Mammary epithelial cell (primary cell): ENCODE measurements at regions of chr6 and their contacts with region 1.

Region 1: DNA sequence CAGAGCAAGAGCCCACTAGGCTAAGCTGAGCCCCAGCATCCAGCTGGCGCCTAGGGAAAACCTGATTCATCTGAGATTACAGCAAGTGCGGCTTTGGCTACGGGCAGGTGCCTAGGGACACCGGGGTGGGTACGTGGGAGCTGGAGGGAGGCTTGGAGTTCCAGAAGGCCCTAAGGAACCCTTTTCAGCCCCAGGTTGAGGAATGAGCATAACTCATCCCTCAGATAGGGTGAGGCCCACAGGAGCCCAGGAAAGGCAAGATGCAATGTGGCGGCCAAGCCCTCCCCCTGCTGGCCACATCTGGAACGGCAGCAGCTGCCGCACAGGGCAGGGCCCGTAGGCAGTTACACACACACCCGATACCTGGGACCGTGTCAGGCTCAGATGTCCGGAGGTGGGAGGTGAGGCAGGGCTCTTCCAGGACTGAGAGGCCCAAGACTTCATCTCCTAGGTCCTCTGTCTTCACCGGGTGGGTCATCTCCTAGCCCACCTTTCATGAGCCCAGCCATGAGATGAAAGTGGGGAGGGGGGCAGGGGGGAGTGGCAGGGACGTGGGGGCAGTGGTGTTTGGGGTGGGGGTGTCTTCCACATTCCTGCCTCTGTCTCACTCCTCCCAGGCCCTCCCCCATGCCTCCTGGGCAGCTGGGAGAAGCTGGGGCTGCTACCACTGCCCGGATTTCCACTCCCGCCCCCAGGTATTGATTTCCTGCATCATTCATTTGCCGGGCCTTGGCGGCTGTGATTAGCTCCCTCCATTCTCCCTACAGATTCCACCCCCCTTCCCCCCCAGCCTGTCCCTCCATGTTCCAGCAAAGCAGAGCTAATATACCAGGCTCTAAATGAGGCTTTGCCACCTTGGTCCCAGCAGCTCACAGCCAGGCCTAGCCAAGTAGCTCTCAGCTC is 5.5 kb downstream of the MDGA1 start:
- DNase-seq: peak; percentile 70
- H3K4me3 ChIP-seq: no peak overlapping the region
- H3K27ac ChIP-seq: no peak overlapping the region
- H3K4me1 ChIP-seq: peaks cover 25% of the 10 kb centered on the region
- H3K27me3 ChIP-seq: no peaks in the 10 kb centered on the region
- CTCF ChIP-seq: peak; percentile 97 to 98

Region 2: GRCh38 chr6:37298958-37299357 is 393.2 kb before region 1 on chr6:
- CTCF ChIA-PET with region 1: no interaction called
- dilution Hi-C with region 1: no loop called
- in situ Hi-C with region 1: no loop called
- intact Hi-C with region 1: no loop called
- DNase-seq: no peak
- H3K4me3 ChIP-seq: no peak overlapping the region
- H3K27ac ChIP-seq: no peak overlapping the region
- H3K4me1 ChIP-seq: no peaks in the 10 kb centered on the region
- H3K27me3 ChIP-seq: no peaks in the 10 kb centered on the region
- CTCF ChIP-seq: no peak

Region 3: GRCh38 chr6:37324131-37325033 is 367.8 kb before region 1 on chr6:
- CTCF ChIA-PET with region 1: no interaction called
- dilution Hi-C with region 1: no loop called
- in situ Hi-C with region 1: no loop called
- intact Hi-C with region 1: loop called (anchors 1 kb)
- DNase-seq: peak; percentile 78
- H3K4me3 ChIP-seq: no peak overlapping the region
- H3K27ac ChIP-seq: no peak overlapping the region
- H3K4me1 ChIP-seq: peaks cover 15% of the 10 kb centered on the region
- H3K27me3 ChIP-seq: no peaks in the 10 kb centered on the region
- CTCF ChIP-seq: no peak

Region 4: DNA sequence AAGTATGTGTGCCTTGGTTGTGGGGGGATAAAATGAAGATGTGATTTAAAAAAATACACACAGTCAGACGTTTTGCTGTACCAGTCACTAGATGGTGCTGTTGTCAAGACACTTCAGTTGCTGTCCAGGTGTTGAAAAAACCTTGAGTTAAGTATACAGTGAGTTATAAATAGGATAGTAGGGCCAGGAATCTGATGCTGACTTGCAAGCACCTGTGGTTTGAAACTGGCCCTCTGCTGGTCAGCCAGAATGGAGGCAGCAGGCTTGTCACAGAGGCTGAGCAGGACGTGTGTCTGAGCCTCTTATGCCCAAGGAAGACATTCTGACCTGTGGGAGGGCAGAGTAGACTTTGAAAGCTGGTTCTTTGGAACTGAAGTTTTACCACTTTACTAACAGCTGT is 310.6 kb before region 1 on chr6:
- CTCF ChIA-PET with region 1: no interaction called
- dilution Hi-C with region 1: no loop called
- in situ Hi-C with region 1: no loop called
- intact Hi-C with region 1: loop called (anchors 1 kb)
- DNase-seq: peak; percentile 68
- H3K4me3 ChIP-seq: no peak overlapping the region
- H3K27ac ChIP-seq: no peak overlapping the region
- H3K4me1 ChIP-seq: peaks cover 6% of the 10 kb centered on the region
- H3K27me3 ChIP-seq: no peaks in the 10 kb centered on the region
- CTCF ChIP-seq: peak; percentile 84 to 87

Region 5: DNA sequence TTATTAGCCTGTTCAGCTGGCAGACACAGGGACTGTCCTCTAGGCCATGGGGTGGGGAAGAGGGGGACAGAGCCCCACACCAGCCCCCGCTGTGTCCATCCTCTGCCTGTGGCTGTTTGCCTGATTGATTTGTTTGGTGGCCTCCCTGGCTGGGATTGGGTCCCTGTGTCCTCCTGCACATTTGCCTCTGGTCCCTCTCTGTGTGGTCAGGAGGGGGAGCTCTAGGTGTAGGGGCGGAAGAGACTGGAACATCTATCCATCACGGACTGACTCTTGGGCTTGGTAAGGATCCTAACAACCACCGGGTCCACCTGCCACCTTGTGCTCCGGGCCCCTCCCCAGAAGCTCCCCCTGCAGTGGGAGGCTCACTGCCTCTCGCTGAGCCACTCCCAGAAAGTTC is 154.0 kb before region 1 on chr6:
- CTCF ChIA-PET with region 1: interaction called, 6 read pairs
- dilution Hi-C with region 1: no loop called
- in situ Hi-C with region 1: loop called in 1 of 2 experiments (anchors 10 kb)
- intact Hi-C with region 1: loop called (anchors 1 kb)
- DNase-seq: peak; percentile 35
- H3K4me3 ChIP-seq: no peak overlapping the region
- H3K27ac ChIP-seq: no peak overlapping the region
- H3K4me1 ChIP-seq: peaks cover 8% of the 10 kb centered on the region
- H3K27me3 ChIP-seq: peaks cover 4% of the 10 kb centered on the region
- CTCF ChIP-seq: peak; percentile 52 to 82

Region 6: GRCh38 chr6:37580176-37580955 is 111.8 kb before region 1 on chr6:
- CTCF ChIA-PET with region 1: no interaction called
- dilution Hi-C with region 1: no loop called
- in situ Hi-C with region 1: no loop called
- intact Hi-C with region 1: loop called (anchors 2 kb)
- DNase-seq: peak; percentile 6
- H3K4me3 ChIP-seq: no peak overlapping the region
- H3K27ac ChIP-seq: no peak overlapping the region
- H3K4me1 ChIP-seq: peaks cover 20% of the 10 kb centered on the region
- H3K27me3 ChIP-seq: no peaks in the 10 kb centered on the region
- CTCF ChIP-seq: no peak

Region 7: DNA sequence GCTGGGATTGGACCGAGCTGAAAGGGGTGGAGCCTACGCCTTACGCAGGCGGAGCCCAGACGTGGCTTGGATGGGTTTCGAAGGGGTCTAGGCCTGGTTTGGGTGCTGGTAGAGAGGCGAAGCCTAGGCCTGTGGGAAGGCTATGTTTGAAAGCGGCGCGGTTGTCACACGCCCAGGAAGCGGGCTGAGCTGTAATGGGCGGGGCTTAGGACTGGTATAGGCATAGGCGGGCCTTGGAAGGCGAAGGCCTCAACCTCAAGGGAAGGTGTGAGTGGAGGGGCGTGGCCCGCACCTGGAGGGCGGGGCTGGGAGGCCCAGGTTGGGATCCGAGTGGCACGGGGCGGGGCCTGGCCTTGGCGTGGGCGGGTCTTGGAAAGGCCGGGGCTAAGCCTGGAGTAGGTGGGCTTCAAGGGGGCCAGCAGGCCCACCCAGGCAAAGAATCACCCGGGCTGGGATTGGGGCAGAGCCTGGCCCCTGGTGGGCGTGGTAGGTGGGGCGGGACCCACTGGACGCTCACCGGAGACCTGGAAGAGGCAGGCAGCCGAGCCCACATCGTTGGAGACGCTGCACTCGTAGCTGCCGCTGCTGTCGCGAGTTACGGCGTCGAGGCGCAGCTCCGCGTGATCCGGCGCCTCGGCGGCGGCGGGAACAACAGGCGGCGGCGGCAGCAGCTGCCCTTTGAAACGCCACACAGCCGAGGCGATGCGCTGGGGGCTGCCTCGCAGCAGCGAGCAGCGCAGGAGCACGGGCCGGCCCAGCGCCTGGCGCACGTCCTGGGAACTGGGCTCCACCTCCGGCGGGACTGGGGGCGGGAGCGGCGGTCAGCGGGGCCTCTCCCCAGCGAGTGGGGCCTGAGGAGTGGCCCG is 43.5 kb before region 1 on chr6:
- CTCF ChIA-PET with region 1: no interaction called
- dilution Hi-C with region 1: no loop called
- in situ Hi-C with region 1: no loop called
- intact Hi-C with region 1: no loop called
- DNase-seq: no peak
- H3K4me3 ChIP-seq: peak overlapping the region; percentile 1 to 36 (median 23)
- H3K27ac ChIP-seq: no peak overlapping the region
- H3K4me1 ChIP-seq: peaks cover 18% of the 10 kb centered on the region
- H3K27me3 ChIP-seq: no peaks in the 10 kb centered on the region
- CTCF ChIP-seq: no peak

Region 8: DNA sequence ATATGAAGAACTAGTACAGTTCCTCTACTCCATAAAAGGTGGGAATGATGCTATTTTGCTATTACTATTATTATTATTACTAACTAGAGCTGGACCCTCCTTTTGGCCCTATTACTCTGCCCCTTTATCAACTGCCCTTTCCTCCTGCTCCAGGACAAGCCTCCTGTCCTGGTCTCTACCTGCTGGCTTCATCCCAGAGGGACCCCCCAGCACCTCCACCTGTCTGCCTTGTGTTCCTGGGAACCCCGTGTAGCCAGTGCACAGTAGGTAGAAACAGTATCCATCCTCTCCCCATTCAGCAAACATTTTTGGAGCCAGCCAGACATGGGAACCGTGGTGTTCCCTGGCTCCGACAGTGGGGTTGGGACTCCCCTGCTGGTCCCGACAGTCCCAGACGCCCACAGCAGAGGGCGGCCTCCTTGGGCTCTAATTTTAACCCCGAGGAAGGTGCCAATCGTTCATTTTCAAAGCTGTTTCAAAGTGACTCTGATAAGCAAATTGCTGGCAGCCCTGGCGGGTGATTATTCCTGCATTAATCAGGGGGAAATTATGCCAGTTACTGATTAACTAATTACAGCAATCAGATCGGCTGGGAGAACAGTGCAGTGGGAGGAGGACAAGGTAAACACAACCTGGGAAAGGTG is 49.7 kb after region 1 on chr6:
- CTCF ChIA-PET with region 1: no interaction called
- dilution Hi-C with region 1: no loop called
- in situ Hi-C with region 1: no loop called
- intact Hi-C with region 1: no loop called
- DNase-seq: no peak
- H3K4me3 ChIP-seq: no peak overlapping the region
- H3K27ac ChIP-seq: no peak overlapping the region
- H3K4me1 ChIP-seq: no peaks in the 10 kb centered on the region
- H3K27me3 ChIP-seq: no peaks in the 10 kb centered on the region
- CTCF ChIP-seq: peak; percentile 21 to 41

Region 9: DNA sequence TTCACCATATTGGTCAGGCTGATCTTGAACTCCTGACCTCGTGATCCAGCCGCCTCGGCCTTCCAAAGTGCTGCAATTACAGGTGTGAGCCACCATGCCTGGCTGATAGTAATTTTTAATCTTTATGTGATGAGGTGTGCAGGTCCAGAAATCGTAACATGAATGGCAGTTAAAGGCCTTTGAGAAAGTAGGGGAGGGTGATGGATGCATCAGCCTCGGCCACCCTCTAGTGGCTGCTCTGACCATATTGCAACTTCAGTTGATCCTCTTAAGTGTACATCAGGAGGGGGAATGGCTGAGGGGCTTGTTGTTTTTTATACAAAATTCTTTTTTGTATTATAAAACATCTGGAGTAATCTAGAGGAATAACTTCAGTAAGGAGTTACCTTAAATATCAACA is 320.4 kb after region 1 on chr6:
- CTCF ChIA-PET with region 1: no interaction called
- dilution Hi-C with region 1: no loop called
- in situ Hi-C with region 1: loop called in 1 of 2 experiments (anchors 10 kb)
- intact Hi-C with region 1: loop called (anchors 5 kb)
- DNase-seq: peak; percentile 30
- H3K4me3 ChIP-seq: no peak overlapping the region
- H3K27ac ChIP-seq: no peak overlapping the region
- H3K4me1 ChIP-seq: no peaks in the 10 kb centered on the region
- H3K27me3 ChIP-seq: no peaks in the 10 kb centered on the region
- CTCF ChIP-seq: peak; percentile 78 to 83